ENCODE measurements at regions of chr19 and their contacts with region 1.

Region 1: DNA sequence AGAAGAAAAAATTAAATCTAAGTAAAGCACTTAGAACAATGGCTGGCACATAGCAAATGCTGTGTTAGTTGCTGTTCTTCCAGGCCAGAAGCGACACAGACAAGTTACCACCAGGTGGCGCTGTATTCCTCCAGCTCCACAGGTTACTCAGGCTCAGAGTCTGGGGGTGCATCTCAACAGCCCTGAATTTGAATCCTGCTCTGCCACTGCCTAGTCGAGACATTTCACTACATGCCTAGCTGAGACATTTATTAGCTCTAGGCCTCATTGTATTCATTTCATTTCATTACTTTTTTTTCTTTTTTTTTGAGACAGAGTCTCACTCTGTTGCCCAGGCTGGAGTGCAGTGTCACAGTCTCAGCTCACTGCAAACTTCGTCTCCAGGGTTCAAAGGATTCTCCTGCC is 16.4 kb upstream of the CYP2B6 start:
- DNase-seq: peak; percentile 74 to 85 (median 79)
- ATAC-seq: peak; percentile 95
- H3K4me3 ChIP-seq: no peak overlapping the region
- H3K27ac ChIP-seq: no peak overlapping the region
- H3K4me1 ChIP-seq: no peaks in the 10 kb centered on the region
- H3K27me3 ChIP-seq: peaks cover 0 to 15% of the 10 kb centered on the region in 2 experiments; a peak in 3 of 5 replicates
- CTCF ChIP-seq: peak; percentile 80 to 86 (median 85)
- EP300 ChIP-seq: no peak
- POLR2A ChIP-seq: no peak
- RAD21 ChIP-seq: peak; percentile 35 to 77; a peak in 3 of 4 replicates

Region 2: GRCh38 chr19:40921005-40921897 is 53.4 kb before region 1 on chr19:
- CTCF ChIA-PET with region 1: no interaction called
- POLR2A ChIA-PET with region 1: no interaction called
- in situ Hi-C with region 1: no loop called
- intact Hi-C with region 1: no loop called
- DNase-seq: peak in 1 of 4 experiments; percentile 49
- ATAC-seq: peak; percentile 63
- H3K4me3 ChIP-seq: no peak overlapping the region
- H3K27ac ChIP-seq: peak overlapping the region; percentile 40; the same call in 1 of the 3 replicates
- H3K4me1 ChIP-seq: peaks cover 0 to 21% of the 10 kb centered on the region in 2 experiments; a peak in 3 of 5 replicates
- H3K27me3 ChIP-seq: no peaks in the 10 kb centered on the region
- CTCF ChIP-seq: no peak
- EP300 ChIP-seq: 0 out of 2 replicates have a peak, but pooled peaks have one; percentile 13
- POLR2A ChIP-seq: no peak
- RAD21 ChIP-seq: no peak

Region 3: GRCh38 chr19:41144403-41144802 is 169.8 kb after region 1 on chr19:
- CTCF ChIA-PET with region 1: interaction called, 3 read pairs
- POLR2A ChIA-PET with region 1: interaction called, 8 read pairs
- in situ Hi-C with region 1: no loop called
- intact Hi-C with region 1: loop called (anchors 1 kb)
- DNase-seq: peak; percentile 60 to 87 (median 64)
- ATAC-seq: peak; percentile 95
- H3K4me3 ChIP-seq: no peak overlapping the region
- H3K27ac ChIP-seq: no peak overlapping the region
- H3K4me1 ChIP-seq: no peaks in the 10 kb centered on the region; a peak in 1 of 5 replicates
- H3K27me3 ChIP-seq: peaks cover 0 to 8% of the 10 kb centered on the region in 2 experiments; a peak in 1 of 5 replicates
- CTCF ChIP-seq: peak; percentile 83 to 95 (median 90)
- EP300 ChIP-seq: no peak
- POLR2A ChIP-seq: no peak
- RAD21 ChIP-seq: peak; percentile 82 to 96